Esophagus muscularis mucosa (tissue), 4 donors: ENCODE measurements at regions of chr2 and their contacts with region 1.

Region 1: GRCh38 chr2:26244309-26245121 is at the starts of genes HADHA and HADHB:
- DNase-seq: peak; percentile 97
- H3K4me3 ChIP-seq: peak within 1 kb of the TSS; percentile 79 to 91 (median 84)
- H3K27ac ChIP-seq: peak within 1 kb of the TSS; percentile 94 to 98 (median 94)
- H3K4me1 ChIP-seq: peaks cover 34 to 78% (median 72%) of the 10 kb centered on the region in 4 donors
- H3K27me3 ChIP-seq: no peaks in the 10 kb centered on the region
- CTCF ChIP-seq: peak; percentile 23 to 46 (median 30)
- EP300 ChIP-seq: no peak
- POLR2A ChIP-seq: peak; percentile 80
- total RNA-seq, gene HADHA: 155 to 266 (median 175) TPM
- total RNA-seq, gene HADHB: 163 to 399 (median 192) TPM

Region 2: DNA sequence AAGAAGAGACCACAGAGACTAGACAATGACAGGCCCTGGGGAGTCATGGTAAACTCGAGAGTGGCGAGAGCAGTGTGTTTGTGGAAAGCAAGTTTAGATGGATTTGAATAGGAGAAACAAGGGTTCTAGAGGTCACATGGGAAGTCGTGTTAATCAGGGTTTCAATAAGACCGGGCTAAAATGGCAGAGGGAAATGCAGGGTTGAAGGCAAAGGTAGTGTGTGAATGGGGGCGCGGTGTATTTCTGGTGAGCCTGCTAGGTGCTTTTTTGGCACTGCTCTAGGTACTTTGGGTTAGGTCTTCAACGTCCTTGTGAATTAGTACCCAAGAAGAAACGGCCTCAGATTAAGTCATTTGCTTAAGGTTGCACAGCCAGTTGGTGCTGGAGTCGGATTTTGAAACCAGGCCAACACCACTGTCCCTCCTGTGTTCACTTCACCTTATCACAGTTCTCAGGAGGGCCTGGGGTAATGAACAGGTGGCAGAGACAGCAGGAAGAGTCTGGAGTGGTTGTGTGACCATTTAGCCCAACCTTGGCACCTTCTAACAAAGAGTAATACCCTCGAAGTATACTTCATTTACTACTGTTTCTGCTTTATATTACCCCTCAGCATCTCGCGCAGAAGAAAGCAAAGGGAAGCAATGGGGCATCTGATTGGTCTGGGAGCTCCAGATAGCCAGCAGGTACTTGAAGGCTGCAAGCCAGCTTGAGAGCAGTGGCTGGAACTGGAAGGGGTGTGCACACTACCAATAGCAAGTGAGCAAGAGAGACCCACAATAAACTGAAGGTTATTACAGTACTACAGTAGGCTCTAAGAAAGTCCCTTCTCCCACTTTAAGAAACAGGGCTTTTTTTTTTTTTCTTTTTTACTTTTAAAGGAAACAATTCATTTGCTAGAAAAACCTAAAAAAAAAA is 105.0 kb before region 1 on chr2:
- intact Hi-C with region 1: no loop called
- DNase-seq: no peak
- H3K4me3 ChIP-seq: no peak overlapping the region
- H3K27ac ChIP-seq: no peak overlapping the region
- H3K4me1 ChIP-seq: no peaks in the 10 kb centered on the region
- H3K27me3 ChIP-seq: no peaks in the 10 kb centered on the region
- CTCF ChIP-seq: no peak
- EP300 ChIP-seq: no peak
- POLR2A ChIP-seq: no peak

Region 3: GRCh38 chr2:26279886-26280285 is 35.4 kb after region 1 on chr2:
- intact Hi-C with region 1: loop called (anchors 5 kb)
- DNase-seq: no peak
- H3K4me3 ChIP-seq: no peak overlapping the region
- H3K27ac ChIP-seq: no peak overlapping the region
- H3K4me1 ChIP-seq: peaks cover 4 to 14% (median 8%) of the 10 kb centered on the region in 4 donors
- H3K27me3 ChIP-seq: no peaks in the 10 kb centered on the region
- CTCF ChIP-seq: no peak
- EP300 ChIP-seq: no peak
- POLR2A ChIP-seq: no peak

Region 4: DNA sequence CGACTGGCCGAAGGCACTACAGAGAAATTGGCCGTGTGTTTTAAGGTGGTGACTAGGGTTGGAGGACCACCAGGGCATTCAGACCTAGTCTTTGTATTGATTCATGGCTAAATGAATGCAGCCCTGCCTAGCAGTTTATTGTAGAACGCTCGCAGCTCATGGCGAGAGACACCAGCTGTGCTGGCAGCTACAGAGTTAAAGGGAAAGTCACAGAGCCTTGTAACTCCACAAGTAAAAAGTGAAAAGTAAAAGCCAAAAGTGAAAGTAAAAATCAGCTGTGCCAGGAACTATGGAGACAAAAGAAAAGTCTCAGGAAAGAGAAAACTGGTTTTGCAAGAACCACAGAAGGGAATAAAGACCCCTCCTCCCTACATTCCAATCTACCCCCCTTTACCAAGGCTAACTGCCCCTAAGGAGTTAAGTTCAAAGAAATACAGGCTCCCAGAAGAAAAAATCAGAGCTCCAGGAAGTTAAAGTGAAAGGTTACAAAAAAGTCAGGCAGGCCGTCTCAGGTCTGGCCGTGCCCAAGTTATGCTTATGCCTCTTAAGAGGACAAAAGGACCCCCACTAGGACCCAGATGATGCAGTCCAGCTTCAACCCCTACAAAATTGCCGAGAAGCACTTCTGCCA is 55.1 kb after region 1 on chr2:
- intact Hi-C with region 1: loop called (anchors 2 kb)
- DNase-seq: no peak
- H3K4me3 ChIP-seq: peak overlapping the region; percentile 55 to 66 (median 62)
- H3K27ac ChIP-seq: peak overlapping the region; percentile 77 to 83 (median 80)
- H3K4me1 ChIP-seq: peaks cover 15 to 28% (median 23%) of the 10 kb centered on the region in 4 donors
- H3K27me3 ChIP-seq: no peaks in the 10 kb centered on the region
- CTCF ChIP-seq: no peak
- EP300 ChIP-seq: no peak
- POLR2A ChIP-seq: no peak

Region 5: DNA sequence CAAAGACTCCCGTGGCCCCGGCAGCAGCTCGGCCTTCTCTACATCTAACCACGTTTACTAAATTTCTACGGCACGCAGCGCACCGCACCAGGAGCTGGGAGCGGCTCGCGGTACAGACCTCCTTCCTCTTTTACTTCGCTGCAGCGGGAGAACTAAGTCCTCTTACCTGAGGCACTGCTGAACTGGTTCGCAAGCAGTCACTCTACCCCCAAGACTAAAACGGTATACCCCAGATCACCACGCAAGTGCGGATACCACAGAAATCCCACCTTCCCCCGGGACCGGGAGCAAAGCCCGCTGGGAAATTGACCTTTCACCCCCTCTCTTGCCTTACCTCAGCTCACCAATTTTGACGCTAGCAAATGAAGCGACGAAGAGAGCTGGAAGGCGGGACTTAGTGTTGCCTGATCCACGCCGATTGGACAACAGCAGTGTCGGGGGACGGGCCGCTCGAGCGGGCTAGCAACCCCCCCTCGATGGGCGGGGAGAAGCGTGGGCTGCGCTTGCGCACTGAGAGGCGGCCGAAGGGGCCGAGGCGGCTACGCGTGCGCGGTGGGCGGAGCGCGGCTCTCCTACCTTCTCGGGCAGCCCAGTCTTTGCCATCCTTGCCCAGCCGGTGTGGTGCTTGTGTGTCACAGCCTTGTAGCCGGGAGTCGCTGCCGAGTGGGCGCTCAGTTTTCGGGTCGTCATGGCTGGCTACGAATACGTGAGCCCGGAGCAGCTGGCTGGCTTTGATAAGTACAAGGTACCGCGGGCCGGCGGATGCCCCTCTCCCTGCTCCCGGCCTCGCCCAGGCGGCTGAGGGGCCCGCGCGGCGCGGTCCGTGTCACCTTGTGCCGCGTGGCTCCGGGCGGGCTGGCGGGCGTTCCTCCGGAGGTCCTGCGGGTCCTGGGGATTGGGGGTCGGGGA is 101.3 kb after region 1 on chr2 and contains the start of gene SELENOI:
- intact Hi-C with region 1: loop called (anchors 5 kb)
- DNase-seq: peak; percentile 99
- H3K4me3 ChIP-seq: peak within 1 kb of the TSS; percentile 78 to 89 (median 86)
- H3K27ac ChIP-seq: peak within 1 kb of the TSS; percentile 93 to 97 (median 94)
- H3K4me1 ChIP-seq: peaks cover 16 to 35% (median 30%) of the 10 kb centered on the region in 4 donors
- H3K27me3 ChIP-seq: no peaks in the 10 kb centered on the region
- CTCF ChIP-seq: no peak
- EP300 ChIP-seq: no peak
- POLR2A ChIP-seq: peak; percentile 88
- total RNA-seq, gene SELENOI: 6.4 to 11.2 (median 9.3) TPM